ENCODE measurements at regions of chr16 and their contacts with region 1.

Region 1: GRCh38 chr16:57576429-57576870 is 34.0 kb downstream of the ADGRG5 start:
- DNase-seq: peak; percentile 71 to 92 (median 87)
- ATAC-seq: peak; percentile 86
- H3K4me3 ChIP-seq: no peak overlapping the region
- H3K4me3 Mint-ChIP-seq: no peak overlapping the region
- H3K27ac ChIP-seq: peak overlapping the region in 1 of 2 experiments; percentile 87
- H3K27ac Mint-ChIP-seq: no peak overlapping the region
- H3K4me1 ChIP-seq: peaks cover 33% of the 10 kb centered on the region
- H3K4me1 Mint-ChIP-seq: peaks cover 44% of the 10 kb centered on the region
- H3K27me3 ChIP-seq: no peaks in the 10 kb centered on the region
- H3K27me3 Mint-ChIP-seq: no peaks in the 10 kb centered on the region
- CTCF ChIP-seq: peak; percentile 96

Region 2: DNA sequence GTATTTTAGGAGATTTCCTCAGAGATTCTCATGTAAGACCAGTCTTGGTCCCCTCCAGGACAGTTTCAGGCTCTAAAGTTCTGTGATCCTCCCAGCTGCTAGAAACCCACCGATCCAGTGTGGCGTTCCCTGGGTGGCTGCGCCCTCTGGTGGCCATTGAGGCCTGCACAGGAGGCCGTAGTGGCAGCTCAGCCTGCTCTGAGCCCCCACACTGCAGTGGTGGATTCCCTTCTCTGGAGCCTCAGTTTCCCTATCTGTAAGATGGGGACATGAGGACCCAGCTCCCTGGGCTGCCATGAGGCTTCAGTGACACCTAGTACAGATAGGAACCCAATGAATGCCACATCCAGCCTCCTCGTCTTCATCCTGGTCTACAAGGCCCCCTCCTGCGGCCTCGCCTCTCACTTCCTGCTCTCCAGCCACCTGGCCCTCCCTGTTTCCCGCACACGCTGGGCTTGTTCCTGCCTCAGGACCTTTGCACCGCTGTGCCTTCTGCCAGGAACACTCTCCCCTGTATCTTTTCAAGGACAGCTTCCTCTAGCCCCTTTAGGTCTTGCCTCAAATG is 56.6 kb before region 1 on chr16:
- CTCF ChIA-PET with region 1: interaction called, 33 read pairs
- POLR2A ChIA-PET with region 1: no interaction called
- intact Hi-C with region 1: no loop called
- DNase-seq: peak; percentile 58 to 90 (median 83)
- ATAC-seq: peak; percentile 99
- H3K4me3 ChIP-seq: no peak overlapping the region
- H3K4me3 Mint-ChIP-seq: no peak overlapping the region
- H3K27ac ChIP-seq: no peak overlapping the region
- H3K27ac Mint-ChIP-seq: no peak overlapping the region
- H3K4me1 ChIP-seq: no peaks in the 10 kb centered on the region
- H3K4me1 Mint-ChIP-seq: peaks cover 6% of the 10 kb centered on the region
- H3K27me3 ChIP-seq: no peaks in the 10 kb centered on the region
- H3K27me3 Mint-ChIP-seq: no peaks in the 10 kb centered on the region
- CTCF ChIP-seq: peak; percentile 94

Region 3: DNA sequence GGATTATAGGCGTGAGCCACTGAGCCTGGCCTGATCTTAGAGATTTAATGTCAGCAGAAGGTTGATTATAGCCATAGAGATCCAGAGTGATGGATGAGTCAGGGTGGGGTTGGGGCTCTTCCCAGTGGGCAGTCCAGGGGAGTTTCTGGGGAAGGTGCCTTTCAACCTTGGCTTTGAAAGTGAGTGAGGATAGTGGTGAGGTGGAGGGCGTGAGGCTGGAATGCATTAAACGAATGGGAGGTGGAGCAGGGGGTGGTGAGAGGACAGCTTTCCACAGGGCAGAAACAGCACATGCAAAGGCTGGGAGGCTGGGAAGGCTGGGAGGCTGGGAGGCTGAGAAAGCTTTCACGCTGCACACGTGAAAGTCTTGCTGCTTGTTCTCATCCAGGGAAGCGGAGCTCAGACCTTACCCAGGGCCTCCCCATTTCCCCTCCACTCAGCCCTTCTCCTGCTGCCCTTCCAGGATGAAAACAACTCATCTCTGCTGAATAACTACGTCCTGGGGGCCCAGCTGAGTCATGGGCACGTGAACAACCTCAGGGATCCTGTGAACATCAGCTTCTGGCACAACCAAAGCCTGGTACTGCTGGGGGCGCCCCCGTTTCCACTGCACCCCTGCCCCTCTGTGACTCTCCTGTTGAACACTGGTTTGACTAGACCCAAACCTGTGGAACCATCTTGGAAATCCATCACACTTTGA is 11.7 kb before region 1 on chr16:
- CTCF ChIA-PET with region 1: interaction called, 28 read pairs
- POLR2A ChIA-PET with region 1: interaction called, 4 read pairs
- intact Hi-C with region 1: no loop called
- DNase-seq: peak in 1 of 9 experiments; percentile 42
- ATAC-seq: no peak
- H3K4me3 ChIP-seq: no peak overlapping the region
- H3K4me3 Mint-ChIP-seq: no peak overlapping the region
- H3K27ac ChIP-seq: no peak overlapping the region
- H3K27ac Mint-ChIP-seq: no peak overlapping the region
- H3K4me1 ChIP-seq: no peaks in the 10 kb centered on the region
- H3K4me1 Mint-ChIP-seq: no peaks in the 10 kb centered on the region
- H3K27me3 ChIP-seq: no peaks in the 10 kb centered on the region
- H3K27me3 Mint-ChIP-seq: peaks cover 2% of the 10 kb centered on the region
- CTCF ChIP-seq: no peak

Region 4: DNA sequence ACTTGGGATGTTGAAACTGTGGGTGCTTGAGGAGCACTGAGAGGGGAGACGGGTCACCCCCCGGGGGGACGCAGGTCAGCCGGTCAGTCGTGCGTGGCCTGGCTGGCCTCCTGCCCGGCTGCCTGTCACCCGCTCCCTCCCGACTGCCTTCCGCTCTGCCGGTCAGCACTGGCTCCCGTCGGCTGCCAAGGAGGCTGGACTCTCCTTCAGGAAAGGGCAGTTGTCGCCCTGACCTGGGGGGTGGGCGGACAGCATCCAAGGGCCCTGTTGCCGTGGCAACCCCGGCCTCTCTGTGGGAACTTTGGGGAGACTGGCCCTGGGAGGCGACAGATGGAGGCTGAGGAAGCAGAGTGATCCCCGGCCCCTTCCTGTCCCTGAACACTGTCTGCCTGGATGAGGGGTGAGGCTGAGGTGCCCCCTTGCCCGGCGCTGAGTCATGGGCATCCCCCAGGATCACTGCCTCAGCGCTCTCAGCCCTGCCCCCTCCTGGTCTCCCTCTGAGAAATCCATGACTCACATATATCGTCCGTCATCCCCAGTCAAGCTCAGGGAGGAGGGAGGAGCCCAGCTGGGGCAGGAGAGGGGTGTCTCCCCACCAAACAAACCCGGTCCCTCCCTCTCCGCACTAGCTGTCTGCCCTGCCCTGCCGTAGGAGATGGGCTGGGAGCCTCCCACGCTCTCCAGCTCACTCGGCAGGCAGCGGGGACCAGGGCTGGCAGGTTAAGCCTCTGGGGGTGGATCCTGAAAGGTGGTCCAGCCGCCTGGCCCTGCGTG is 51.7 kb after region 1 on chr16 and contains the start of gene ADGRG1:
- CTCF ChIA-PET with region 1: interaction called, 101 read pairs
- POLR2A ChIA-PET with region 1: no interaction called
- intact Hi-C with region 1: no loop called
- DNase-seq: peak in 5 of 9 experiments; percentile 31 to 70 (median 52)
- ATAC-seq: peak; percentile 78
- H3K4me3 ChIP-seq: peak within 1 kb of the TSS in 1 of 2 experiments; percentile 50
- H3K4me3 Mint-ChIP-seq: peak within 1 kb of the TSS; percentile 42
- H3K27ac ChIP-seq: peak within 1 kb of the TSS in 1 of 2 experiments; percentile 53
- H3K27ac Mint-ChIP-seq: no peak within 1 kb of the TSS
- H3K4me1 ChIP-seq: peaks cover 7% of the 10 kb centered on the region
- H3K4me1 Mint-ChIP-seq: peaks cover 13% of the 10 kb centered on the region
- H3K27me3 ChIP-seq: no peaks in the 10 kb centered on the region
- H3K27me3 Mint-ChIP-seq: peaks cover 13% of the 10 kb centered on the region
- CTCF ChIP-seq: no peak
- total RNA-seq, gene ADGRG1: 3.8 to 4.4 TPM

Region 5: DNA sequence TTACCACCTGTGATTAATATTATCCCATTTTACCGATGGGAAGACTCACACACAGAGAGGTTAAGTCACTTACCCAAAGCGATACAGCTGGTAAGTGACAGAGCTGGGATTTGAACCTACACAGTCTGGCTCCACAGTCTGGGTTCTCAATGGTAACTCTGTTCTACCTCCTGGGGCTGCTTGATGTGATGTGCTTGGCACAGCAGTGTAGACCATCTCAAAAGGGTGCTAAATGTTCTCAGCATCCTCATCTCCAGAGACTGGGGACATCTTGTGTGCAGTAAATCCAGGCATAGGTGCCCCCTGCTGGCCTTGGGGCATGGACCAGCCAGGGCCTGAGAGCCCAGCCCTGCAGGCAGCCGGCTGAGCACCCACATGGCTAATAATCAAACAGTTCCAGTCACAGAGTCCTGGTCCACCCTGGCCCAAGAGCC is 143.7 kb after region 1 on chr16:
- CTCF ChIA-PET with region 1: interaction called, 7 read pairs
- POLR2A ChIA-PET with region 1: no interaction called
- intact Hi-C with region 1: loop called in 1 of 2 experiments (anchors 2 kb)
- DNase-seq: peak in 7 of 9 experiments; percentile 16 to 70 (median 50)
- ATAC-seq: peak; percentile 73
- H3K4me3 ChIP-seq: no peak overlapping the region
- H3K4me3 Mint-ChIP-seq: no peak overlapping the region
- H3K27ac ChIP-seq: no peak overlapping the region
- H3K27ac Mint-ChIP-seq: no peak overlapping the region
- H3K4me1 ChIP-seq: no peaks in the 10 kb centered on the region
- H3K4me1 Mint-ChIP-seq: no peaks in the 10 kb centered on the region
- H3K27me3 ChIP-seq: no peaks in the 10 kb centered on the region
- H3K27me3 Mint-ChIP-seq: no peaks in the 10 kb centered on the region
- CTCF ChIP-seq: no peak

Region 6: GRCh38 chr16:58000706-58001676 is 424.5 kb after region 1 on chr16 and contains the start of gene USB1:
- CTCF ChIA-PET with region 1: interaction called, 9 read pairs
- POLR2A ChIA-PET with region 1: no interaction called
- intact Hi-C with region 1: loop called (anchors 1 to 5 kb)
- DNase-seq: peak; percentile 68 to 92 (median 84)
- ATAC-seq: peak; percentile 77
- H3K4me3 ChIP-seq: peak within 1 kb of the TSS; percentile 69 to 82
- H3K4me3 Mint-ChIP-seq: peak within 1 kb of the TSS; percentile 91
- H3K27ac ChIP-seq: peak within 1 kb of the TSS; percentile 61 to 71
- H3K27ac Mint-ChIP-seq: peak within 1 kb of the TSS; percentile 87
- H3K4me1 ChIP-seq: peaks cover 43% of the 10 kb centered on the region
- H3K4me1 Mint-ChIP-seq: peaks cover 64% of the 10 kb centered on the region
- H3K27me3 ChIP-seq: no peaks in the 10 kb centered on the region
- H3K27me3 Mint-ChIP-seq: no peaks in the 10 kb centered on the region
- CTCF ChIP-seq: peak; percentile 77
- total RNA-seq, gene USB1: 24.7 to 27.9 TPM

Region 7: GRCh38 chr16:59392911-59393310 is 1816.5 kb after region 1 on chr16:
- CTCF ChIA-PET with region 1: no interaction called
- POLR2A ChIA-PET with region 1: no interaction called
- intact Hi-C with region 1: no loop called
- DNase-seq: no peak
- ATAC-seq: no peak
- H3K4me3 ChIP-seq: no peak overlapping the region
- H3K4me3 Mint-ChIP-seq: no peak overlapping the region
- H3K27ac ChIP-seq: no peak overlapping the region
- H3K27ac Mint-ChIP-seq: no peak overlapping the region
- H3K4me1 ChIP-seq: no peaks in the 10 kb centered on the region
- H3K4me1 Mint-ChIP-seq: no peaks in the 10 kb centered on the region
- H3K27me3 ChIP-seq: no peaks in the 10 kb centered on the region
- H3K27me3 Mint-ChIP-seq: peaks cover 4% of the 10 kb centered on the region
- CTCF ChIP-seq: no peak

Measured in CD8-positive, alpha-beta T cell (primary cell).